PC-3 (cell line): ENCODE measurements at regions of chr14 and their contacts with region 1.

Region 1: GRCh38 chr14:20652996-20653975 is 11.8 kb upstream of the OR6S1 start:
- DNase-seq: no peak
- ATAC-seq: no peak
- H3K4me3 ChIP-seq: no peak overlapping the region
- H3K27ac ChIP-seq: no peak overlapping the region
- H3K4me1 ChIP-seq: no peaks in the 10 kb centered on the region
- H3K27me3 ChIP-seq: peaks cover 36% of the 10 kb centered on the region
- CTCF ChIP-seq: no peak

Region 2: GRCh38 chr14:20184181-20184580 is 469.1 kb before region 1 on chr14:
- CTCF ChIA-PET with region 1: interaction called, 12 read pairs
- POLR2A ChIA-PET with region 1: no interaction called
- intact Hi-C with region 1: no loop called
- DNase-seq: no peak
- ATAC-seq: no peak
- H3K4me3 ChIP-seq: no peak overlapping the region
- H3K27ac ChIP-seq: no peak overlapping the region
- H3K4me1 ChIP-seq: no peaks in the 10 kb centered on the region
- H3K27me3 ChIP-seq: no peaks in the 10 kb centered on the region; the same call in 1 of the 2 replicates
- CTCF ChIP-seq: no peak

Region 3: DNA sequence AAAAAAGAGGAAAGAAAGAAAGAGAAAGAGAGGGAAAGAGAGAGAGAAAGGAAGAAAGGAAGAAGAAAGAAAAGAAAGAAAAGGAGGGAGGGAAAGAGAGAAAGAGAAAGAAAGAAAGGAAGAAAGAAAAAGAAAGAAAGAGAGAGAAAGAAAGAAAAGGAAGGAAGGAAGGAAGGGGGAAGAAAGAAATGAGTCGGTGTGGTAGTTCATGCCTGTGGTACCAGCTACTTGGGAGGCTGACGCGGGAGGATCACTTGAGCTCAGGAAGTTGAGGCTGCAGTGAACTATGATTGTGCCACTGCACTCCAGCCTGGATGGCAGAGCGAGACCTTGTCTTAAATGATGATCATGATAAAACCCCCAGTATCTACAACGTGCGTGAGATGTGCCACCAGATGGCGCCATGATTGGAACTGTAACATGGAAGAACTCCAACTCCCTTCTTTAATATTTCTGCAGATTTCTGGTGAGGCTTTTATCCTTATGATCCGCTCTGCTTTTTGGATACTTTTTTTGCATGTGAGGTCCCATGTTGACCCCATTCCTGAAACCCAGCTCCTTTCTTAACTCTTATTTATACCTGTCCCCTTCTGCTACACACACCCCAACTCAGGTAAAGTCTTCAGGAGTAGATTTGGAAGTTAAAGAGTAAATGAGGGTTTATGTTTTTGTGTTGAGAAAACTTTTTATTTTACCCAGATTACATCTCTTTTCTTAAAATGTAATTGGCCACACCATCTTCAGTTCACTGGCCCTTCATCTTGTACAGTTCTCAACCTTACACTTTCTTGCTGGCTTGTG is 122.3 kb before region 1 on chr14:
- CTCF ChIA-PET with region 1: no interaction called
- POLR2A ChIA-PET with region 1: no interaction called
- intact Hi-C with region 1: no loop called
- DNase-seq: peak; percentile 88
- ATAC-seq: peak; percentile 85
- H3K4me3 ChIP-seq: no peak overlapping the region
- H3K27ac ChIP-seq: no peak overlapping the region
- H3K4me1 ChIP-seq: no peaks in the 10 kb centered on the region
- H3K27me3 ChIP-seq: peaks cover 8% of the 10 kb centered on the region
- CTCF ChIP-seq: peak; percentile 88

Region 4: DNA sequence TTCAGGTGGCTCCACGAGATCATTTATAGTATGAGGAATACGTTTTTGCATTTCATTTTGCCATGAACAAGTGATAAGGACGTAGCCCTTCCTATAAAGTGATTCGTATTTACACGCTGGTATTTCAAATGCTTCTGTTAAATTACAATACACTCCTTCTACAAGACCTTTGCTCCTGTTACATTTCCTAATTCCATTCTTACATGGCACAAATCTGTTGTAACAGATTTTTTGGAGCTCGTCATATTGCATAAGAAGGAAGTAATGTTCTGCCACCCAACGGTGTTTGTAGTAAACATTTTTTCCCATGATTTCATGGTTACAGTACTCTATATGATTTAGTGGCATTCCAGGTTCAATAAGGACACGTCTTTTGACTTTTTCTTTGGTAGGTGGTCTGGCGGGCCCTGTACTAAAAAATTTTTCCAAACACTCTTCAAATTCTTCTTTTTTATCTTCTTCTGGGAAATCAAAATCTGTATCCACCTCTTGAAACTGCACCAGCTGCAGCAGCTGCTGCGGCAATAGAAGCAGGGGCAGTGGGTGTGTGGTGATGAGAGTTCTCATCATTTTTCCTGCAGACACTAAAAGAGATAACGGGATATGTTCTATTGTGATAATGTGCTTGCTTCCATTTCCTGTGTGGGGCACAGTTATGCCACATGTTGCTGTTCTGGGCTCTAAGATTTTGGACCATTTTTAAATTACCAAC is 96.6 kb before region 1 on chr14:
- CTCF ChIA-PET with region 1: no interaction called
- POLR2A ChIA-PET with region 1: no interaction called
- intact Hi-C with region 1: no loop called
- DNase-seq: no peak
- ATAC-seq: no peak
- H3K4me3 ChIP-seq: no peak overlapping the region
- H3K27ac ChIP-seq: no peak overlapping the region
- H3K4me1 ChIP-seq: no peaks in the 10 kb centered on the region
- H3K27me3 ChIP-seq: peaks cover 40% of the 10 kb centered on the region
- CTCF ChIP-seq: no peak

Region 5: GRCh38 chr14:20568393-20568792 is 84.9 kb before region 1 on chr14:
- CTCF ChIA-PET with region 1: no interaction called
- POLR2A ChIA-PET with region 1: no interaction called
- intact Hi-C with region 1: no loop called
- DNase-seq: no peak
- ATAC-seq: no peak
- H3K4me3 ChIP-seq: no peak overlapping the region
- H3K27ac ChIP-seq: no peak overlapping the region
- H3K4me1 ChIP-seq: no peaks in the 10 kb centered on the region
- H3K27me3 ChIP-seq: peaks cover 17% of the 10 kb centered on the region; the same call in 1 of the 2 replicates
- CTCF ChIP-seq: no peak

Region 6: DNA sequence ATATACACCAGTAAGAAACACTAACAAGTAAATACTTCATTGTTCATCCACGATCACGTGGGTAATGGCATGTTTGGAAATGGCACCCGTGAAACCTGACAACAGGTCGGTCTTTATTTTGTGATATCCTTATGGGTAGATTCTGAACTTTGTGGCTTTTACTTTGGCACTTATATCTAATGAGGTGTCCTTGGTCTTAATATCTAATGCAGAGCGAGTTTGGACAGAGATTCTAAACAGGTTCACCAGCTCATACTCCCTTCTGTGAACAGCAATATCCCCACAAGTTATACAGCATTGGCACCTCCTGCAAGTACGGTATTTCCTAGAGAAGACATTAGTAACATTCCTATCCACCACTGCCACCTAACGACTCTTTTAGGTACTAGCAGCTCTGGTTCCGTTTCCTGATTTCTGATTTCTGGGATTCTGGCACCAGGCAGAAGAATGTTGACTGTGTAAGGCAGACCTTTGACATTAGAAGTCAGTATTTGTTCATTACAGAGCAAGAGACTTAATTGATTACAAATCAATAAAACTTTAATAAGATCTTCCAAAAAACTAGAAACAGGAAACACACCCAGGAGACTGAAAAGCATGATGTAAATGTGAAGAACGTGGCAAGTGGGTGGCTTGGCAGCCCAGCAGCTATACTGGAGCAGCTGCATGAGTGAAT is 37.7 kb after region 1 on chr14:
- CTCF ChIA-PET with region 1: interaction called, 3 read pairs
- POLR2A ChIA-PET with region 1: no interaction called
- intact Hi-C with region 1: loop called (anchors 1 kb)
- DNase-seq: peak; percentile 86
- ATAC-seq: peak; percentile 89
- H3K4me3 ChIP-seq: peak overlapping the region; percentile 55
- H3K27ac ChIP-seq: no peak overlapping the region
- H3K4me1 ChIP-seq: no peaks in the 10 kb centered on the region
- H3K27me3 ChIP-seq: no peaks in the 10 kb centered on the region
- CTCF ChIP-seq: peak; percentile 92